Activated CD4-positive, alpha-beta memory T cell treated with anti-CD3 and anti-CD28 coated beads, Interleukin-2, amount 10 ng/mL, durations not matched to agents 7 days and 5 days (primary cell): ENCODE measurements at regions of chr1 and their contacts with region 1.

Region 1: GRCh38 chr1:193539731-193540459 is 353.5 kb upstream of the B3GALT2 start:
- DNase-seq: peak; percentile 44
- H3K4me3 Mint-ChIP-seq: peak overlapping the region; percentile 71
- H3K27ac Mint-ChIP-seq: peak overlapping the region; percentile 93
- H3K4me1 Mint-ChIP-seq: peaks cover 60% of the 10 kb centered on the region
- H3K27me3 Mint-ChIP-seq: no peaks in the 10 kb centered on the region

Region 2: GRCh38 chr1:193456811-193457280 is 83.0 kb before region 1 on chr1:
- CTCF ChIA-PET with region 1: no interaction called
- POLR2A ChIA-PET with region 1: interaction called, 60 read pairs
- DNase-seq: no peak
- H3K4me3 Mint-ChIP-seq: no peak overlapping the region
- H3K27ac Mint-ChIP-seq: no peak overlapping the region
- H3K4me1 Mint-ChIP-seq: peaks cover 28% of the 10 kb centered on the region
- H3K27me3 Mint-ChIP-seq: no peaks in the 10 kb centered on the region

Region 3: DNA sequence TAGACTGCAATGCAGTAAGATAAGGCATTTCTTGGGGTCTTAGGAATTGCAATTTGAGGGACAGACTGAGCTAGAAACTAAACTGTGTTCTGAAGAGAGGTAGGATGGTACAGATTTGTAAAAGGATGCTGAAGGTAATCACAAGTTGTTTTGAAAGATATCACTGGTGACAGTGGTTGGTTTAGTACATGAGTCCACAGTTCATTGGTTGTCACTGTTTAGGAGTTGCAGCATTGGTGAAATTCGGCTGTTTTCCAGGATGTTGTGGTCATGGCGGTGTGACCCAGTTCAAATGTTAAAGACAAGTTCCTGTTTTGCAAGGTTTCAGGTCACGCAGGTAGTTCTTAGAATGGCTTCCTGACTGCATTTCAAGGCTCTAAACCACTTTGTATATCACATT is 60.7 kb before region 1 on chr1:
- CTCF ChIA-PET with region 1: interaction called, 7 read pairs
- POLR2A ChIA-PET with region 1: interaction called, 121 read pairs
- DNase-seq: peak; percentile 93
- H3K4me3 Mint-ChIP-seq: peak overlapping the region; percentile 2
- H3K27ac Mint-ChIP-seq: peak overlapping the region; percentile 93
- H3K4me1 Mint-ChIP-seq: peaks cover 67% of the 10 kb centered on the region
- H3K27me3 Mint-ChIP-seq: no peaks in the 10 kb centered on the region

Region 4: DNA sequence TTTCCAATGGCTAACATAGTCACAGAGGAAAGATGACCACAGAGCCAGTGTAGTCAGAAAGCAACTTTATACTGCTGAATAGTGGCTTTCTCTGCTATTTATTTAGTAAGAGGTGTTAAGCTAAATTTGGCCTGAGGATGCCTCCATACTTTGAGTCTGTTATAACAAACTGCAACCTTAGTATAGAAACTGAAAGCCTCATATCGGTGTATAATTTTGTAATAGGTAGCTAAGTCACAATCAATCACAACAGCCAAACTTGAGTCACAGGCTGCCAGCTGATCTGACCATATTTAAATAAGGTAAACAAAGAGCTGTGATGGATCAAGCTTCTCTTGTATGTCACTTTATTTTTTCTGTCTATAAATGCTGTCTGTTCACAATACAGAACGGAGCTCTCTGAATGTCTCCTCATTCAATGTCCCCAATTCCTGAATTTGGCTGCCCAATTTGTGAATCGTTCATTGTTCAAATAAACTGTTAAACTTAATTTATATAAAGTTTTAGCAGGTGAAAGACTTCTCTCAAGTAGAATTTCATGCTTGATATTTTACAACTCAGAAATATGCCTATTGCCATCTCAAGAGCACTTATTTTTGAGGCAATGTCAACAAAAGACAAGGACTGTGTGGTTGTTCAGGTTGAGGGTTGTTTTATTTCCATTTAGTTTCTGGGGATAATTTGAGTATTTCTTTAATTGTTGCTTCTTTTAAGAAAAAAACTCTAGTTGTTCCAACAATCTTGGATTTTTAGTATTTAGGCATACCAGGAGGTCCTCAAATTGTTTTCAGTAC is 13.8 kb before region 1 on chr1:
- CTCF ChIA-PET with region 1: interaction called, 3 read pairs
- POLR2A ChIA-PET with region 1: interaction called, 15 read pairs
- DNase-seq: no peak
- H3K4me3 Mint-ChIP-seq: no peak overlapping the region
- H3K27ac Mint-ChIP-seq: no peak overlapping the region
- H3K4me1 Mint-ChIP-seq: peaks cover 4% of the 10 kb centered on the region
- H3K27me3 Mint-ChIP-seq: no peaks in the 10 kb centered on the region

Region 5: DNA sequence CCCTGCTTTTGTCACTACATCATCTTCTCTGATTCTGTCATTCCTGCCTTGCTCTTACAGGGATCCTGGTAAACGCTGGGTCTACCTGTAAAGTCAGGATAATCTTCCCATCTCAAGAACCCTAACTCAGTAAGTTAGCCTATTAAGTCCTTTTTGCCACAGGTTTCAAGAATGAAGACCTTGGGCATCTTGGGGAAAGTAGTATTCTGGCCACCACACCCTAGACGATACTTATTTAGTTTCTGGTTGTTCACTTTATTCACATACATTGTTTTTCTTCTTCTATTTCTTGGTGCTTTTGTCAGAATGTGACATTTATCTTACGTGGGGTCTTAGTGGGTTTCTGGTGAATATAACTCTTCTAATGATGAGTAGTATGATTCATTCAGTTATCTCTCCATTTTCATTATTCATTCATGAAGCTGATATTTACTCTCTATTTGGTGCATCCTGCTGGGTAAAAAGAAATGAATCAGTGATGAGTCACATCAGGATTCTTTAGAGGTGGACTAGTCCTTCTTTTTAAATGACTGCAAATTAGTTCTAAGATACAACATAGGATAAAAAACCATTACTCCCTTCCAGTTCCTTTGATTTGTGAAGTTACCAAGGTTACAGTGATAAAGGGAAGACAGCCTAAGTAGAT is 160.9 kb after region 1 on chr1:
- CTCF ChIA-PET with region 1: no interaction called
- POLR2A ChIA-PET with region 1: no interaction called
- DNase-seq: no peak
- H3K4me3 Mint-ChIP-seq: no peak overlapping the region
- H3K27ac Mint-ChIP-seq: no peak overlapping the region
- H3K4me1 Mint-ChIP-seq: peaks cover 16% of the 10 kb centered on the region
- H3K27me3 Mint-ChIP-seq: no peaks in the 10 kb centered on the region